Heart right ventricle (tissue), 16 donors: ENCODE measurements at regions of chr1 and their contacts with region 1.

Region 1: DNA sequence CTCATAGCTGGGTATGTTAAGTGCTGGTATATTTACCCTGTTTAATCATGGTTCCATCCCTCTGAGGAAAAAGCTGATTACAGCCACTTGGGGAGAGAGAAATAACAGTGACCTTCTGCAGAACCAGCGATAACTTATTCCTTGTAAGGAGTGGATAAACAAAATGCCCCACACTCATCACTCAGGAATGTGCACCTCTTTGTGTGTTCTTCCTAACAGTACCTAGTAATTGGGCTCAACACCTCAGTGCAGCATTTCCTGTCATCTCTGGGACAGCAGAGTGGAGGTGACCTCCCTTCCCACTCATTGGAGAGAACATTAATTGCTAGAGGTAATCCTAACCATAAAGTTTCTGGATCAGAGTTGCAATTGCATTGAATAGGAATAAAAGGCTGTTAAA is 112.5 kb upstream of the F3 start:
- DNase-seq: peak in 1 of 2 donors; percentile 18
- ATAC-seq: peak in 7 of 8 donors; percentile 2 to 42 (median 13)
- H3K4me3 ChIP-seq: no peak overlapping the region
- H3K27ac ChIP-seq: peak overlapping the region in 7 of 10 donors; percentile 18 to 75 (median 69)
- H3K4me1 ChIP-seq: peaks cover 0 to 30% (median 3%) of the 10 kb centered on the region in 9 donors
- H3K27me3 ChIP-seq: no peaks in the 10 kb centered on the region
- CTCF ChIP-seq: no peak

Region 2: GRCh38 chr1:94481473-94481933 is 172.5 kb before region 1 on chr1:
- intact Hi-C with region 1: no loop called
- DNase-seq: peak in 1 of 2 donors; percentile 42
- ATAC-seq: peak; percentile 65 to 94 (median 89)
- H3K4me3 ChIP-seq: no peak overlapping the region
- H3K27ac ChIP-seq: no peak overlapping the region
- H3K4me1 ChIP-seq: peaks cover 0 to 7% (median 0%) of the 10 kb centered on the region in 9 donors
- H3K27me3 ChIP-seq: no peaks in the 10 kb centered on the region
- CTCF ChIP-seq: peak; percentile 67 to 88 (median 82)

Region 3: DNA sequence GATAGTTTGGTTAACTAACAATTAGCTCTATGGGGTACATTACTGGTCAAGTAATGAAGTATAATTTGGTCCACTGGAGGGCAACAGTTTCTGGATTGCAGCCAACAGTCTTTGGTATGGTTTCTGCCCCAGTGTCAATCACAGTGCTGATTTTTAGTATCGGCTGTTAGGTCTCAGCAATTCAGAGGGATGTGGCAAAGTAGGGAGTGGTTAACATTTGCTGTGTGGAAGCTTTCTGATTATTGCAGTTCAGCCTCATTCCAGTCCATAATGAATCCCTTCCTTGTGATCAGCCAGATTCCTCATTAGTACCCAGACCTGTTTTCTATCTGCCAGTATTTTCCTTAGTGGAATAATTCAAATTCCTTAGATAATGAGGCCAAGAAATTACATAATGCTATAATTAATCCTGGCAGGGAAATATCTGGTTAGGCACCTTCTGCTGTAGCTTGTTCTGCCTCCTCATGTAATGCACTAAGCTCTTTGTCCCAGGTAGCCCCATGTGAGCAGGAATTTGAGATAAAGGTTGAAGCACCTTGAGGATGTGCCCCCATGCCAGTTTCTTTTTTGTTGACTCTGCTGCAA is 126.5 kb before region 1 on chr1:
- intact Hi-C with region 1: loop called in 1 of 10 experiments (anchors 10 kb)
- DNase-seq: no peak
- ATAC-seq: peak; percentile 31 to 57 (median 42)
- H3K4me3 ChIP-seq: no peak overlapping the region
- H3K27ac ChIP-seq: peak overlapping the region in 2 of 10 donors; percentile 23 to 35
- H3K4me1 ChIP-seq: peaks cover 0 to 20% (median 9%) of the 10 kb centered on the region in 9 donors
- H3K27me3 ChIP-seq: no peaks in the 10 kb centered on the region
- CTCF ChIP-seq: peak in 3 of 9 donors; percentile 7 to 26 (median 13)

Region 4: DNA sequence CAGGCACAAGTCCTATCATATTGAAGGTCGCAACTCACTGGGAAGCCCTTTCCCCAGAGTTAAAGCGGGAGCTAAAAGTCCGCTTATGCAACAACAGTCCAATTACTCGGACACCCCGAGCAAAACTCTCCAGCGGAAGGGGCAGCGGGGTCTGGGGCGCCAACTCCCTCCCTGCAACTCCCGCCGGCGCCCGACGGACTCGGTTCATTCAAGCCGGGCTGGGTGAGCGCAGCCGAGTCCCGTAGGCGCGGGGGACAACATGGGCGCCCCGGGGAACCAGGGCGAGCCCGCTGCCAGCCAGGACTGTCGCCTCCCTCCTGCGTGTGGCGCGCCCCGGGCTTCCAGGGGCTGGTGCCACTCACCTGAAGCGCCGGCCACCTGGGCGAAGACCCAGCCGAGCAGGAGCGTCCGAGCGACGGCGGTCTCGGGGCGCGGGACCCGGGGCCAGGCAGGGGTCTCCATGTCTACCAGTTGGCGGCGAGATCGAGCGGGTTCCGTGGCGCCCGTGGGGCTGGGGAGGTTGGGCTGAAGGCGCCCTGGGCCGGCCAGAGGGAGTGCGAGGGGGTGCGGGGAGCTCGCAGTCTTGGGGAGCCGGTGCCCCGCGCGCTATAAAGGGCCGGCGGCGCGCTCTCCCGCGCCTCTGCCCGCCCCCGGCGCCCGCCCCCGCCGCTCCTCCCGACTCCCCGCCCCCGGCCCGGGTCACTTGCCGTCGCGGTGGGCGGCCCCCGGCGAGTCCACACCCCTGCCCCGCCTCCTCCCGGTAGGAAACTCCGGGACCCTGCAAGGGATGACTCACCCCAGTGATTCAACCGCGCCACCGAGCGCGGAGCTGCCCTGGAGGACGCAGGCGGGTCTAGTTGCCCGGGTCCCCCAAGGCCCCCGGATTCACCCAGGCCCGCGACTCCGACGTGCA is 112.6 kb before region 1 on chr1 and contains the start of gene F3:
- intact Hi-C with region 1: loop called in 5 of 10 experiments (anchors 2 to 10 kb)
- DNase-seq: peak; percentile 89
- ATAC-seq: peak; percentile 92 to 96 (median 94)
- H3K4me3 ChIP-seq: peak within 1 kb of the TSS; percentile 45 to 80 (median 72)
- H3K27ac ChIP-seq: peak within 1 kb of the TSS; percentile 87 to 95 (median 90)
- H3K4me1 ChIP-seq: peaks cover 0 to 50% (median 32%) of the 10 kb centered on the region in 9 donors
- H3K27me3 ChIP-seq: peaks cover 0 to 12% (median 0%) of the 10 kb centered on the region in 7 donors
- CTCF ChIP-seq: peak in 2 of 9 donors; percentile 29 to 34
- total RNA-seq, gene F3: 20.4 to 99.0 (median 48.5) TPM

Region 5: GRCh38 chr1:94702442-94702815 is 48.4 kb after region 1 on chr1:
- intact Hi-C with region 1: no loop called
- DNase-seq: no peak
- ATAC-seq: peak in 7 of 8 donors; percentile 46 to 85 (median 61)
- H3K4me3 ChIP-seq: no peak overlapping the region
- H3K27ac ChIP-seq: peak overlapping the region in 3 of 10 donors; percentile 48 to 53 (median 50)
- H3K4me1 ChIP-seq: peaks cover 0 to 8% (median 4%) of the 10 kb centered on the region in 9 donors
- H3K27me3 ChIP-seq: no peaks in the 10 kb centered on the region
- CTCF ChIP-seq: no peak

Region 6: GRCh38 chr1:94755675-94756074 is 101.6 kb after region 1 on chr1:
- intact Hi-C with region 1: loop called in 3 of 10 experiments (anchors 1 to 5 kb)
- DNase-seq: peak in 1 of 2 donors; percentile 45
- ATAC-seq: peak; percentile 29 to 70 (median 42)
- H3K4me3 ChIP-seq: no peak overlapping the region
- H3K27ac ChIP-seq: peak overlapping the region in 4 of 10 donors; percentile 13 to 85 (median 70)
- H3K4me1 ChIP-seq: peaks cover 0 to 51% (median 32%) of the 10 kb centered on the region in 9 donors
- H3K27me3 ChIP-seq: no peaks in the 10 kb centered on the region
- CTCF ChIP-seq: no peak